ENCODE measurements at regions of chr22 and their contacts with region 1.

Region 1: DNA sequence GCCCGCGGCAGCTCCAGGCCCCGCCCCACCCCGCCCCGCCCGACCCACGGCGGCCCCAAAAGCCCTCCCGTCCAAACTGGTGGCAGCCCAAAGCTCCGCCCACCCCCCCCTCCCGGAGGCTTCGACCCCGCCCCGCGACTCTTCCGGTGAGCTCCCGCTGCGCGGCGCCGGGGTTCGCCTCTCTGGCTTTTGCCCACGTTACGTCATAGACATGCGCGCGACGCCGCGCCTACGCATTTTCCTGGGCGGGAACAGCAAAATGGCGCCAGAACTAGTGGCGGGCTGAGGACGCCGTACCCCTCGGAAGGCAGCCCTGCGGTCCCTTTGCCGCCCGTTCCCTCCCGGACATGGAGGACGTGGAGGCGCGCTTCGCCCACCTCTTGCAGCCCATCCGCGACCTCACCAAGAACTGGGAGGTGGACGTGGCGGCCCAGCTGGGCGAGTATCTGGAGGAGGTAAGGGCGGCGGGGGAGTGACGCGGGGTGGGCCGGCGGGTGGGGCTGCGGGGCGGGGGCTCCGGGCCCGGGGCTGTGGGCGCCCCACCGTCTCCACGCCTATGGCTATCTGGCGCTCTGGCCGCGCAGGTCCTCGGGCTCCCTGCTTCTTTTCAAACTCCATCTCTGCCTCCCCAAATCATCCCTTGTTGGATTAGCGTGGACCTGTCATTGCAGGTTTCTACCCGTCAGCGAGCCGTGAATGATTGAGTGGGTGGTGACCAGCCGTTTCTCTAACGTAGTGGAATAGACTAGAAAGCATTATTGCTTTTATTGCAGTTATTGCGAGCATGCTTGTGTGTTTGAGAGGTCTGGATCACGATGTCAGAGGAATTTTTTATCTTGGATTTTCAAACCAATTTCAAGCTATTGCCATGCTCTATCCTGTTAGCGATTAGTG is at the start of gene NCAPH2:
- DNase-seq: peak; percentile 96
- H3K4me3 Mint-ChIP-seq: peak within 1 kb of the TSS; percentile 92
- H3K27ac Mint-ChIP-seq: peak within 1 kb of the TSS; percentile 93
- H3K4me1 Mint-ChIP-seq: peaks cover 12% of the 10 kb centered on the region
- H3K27me3 Mint-ChIP-seq: no peaks in the 10 kb centered on the region
- CTCF ChIP-seq: no peak
- total RNA-seq, gene NCAPH2: 31.6 and 39.8 TPM in 2 replicates

Region 2: GRCh38 chr22:50525390-50526068 is 17.3 kb after region 1 on chr22 and contains the start of gene SCO2:
- CTCF ChIA-PET with region 1: interaction called, 7 read pairs
- POLR2A ChIA-PET with region 1: interaction called, 113 read pairs
- intact Hi-C with region 1: no loop called
- DNase-seq: peak; percentile 96
- H3K4me3 Mint-ChIP-seq: peak within 1 kb of the TSS; percentile 85
- H3K27ac Mint-ChIP-seq: peak within 1 kb of the TSS; percentile 88
- H3K4me1 Mint-ChIP-seq: peaks cover 20% of the 10 kb centered on the region
- H3K27me3 Mint-ChIP-seq: no peaks in the 10 kb centered on the region
- CTCF ChIP-seq: peak; percentile 49
- total RNA-seq, gene SCO2: 2.4 and 5.4 TPM in 2 replicates

Region 3: DNA sequence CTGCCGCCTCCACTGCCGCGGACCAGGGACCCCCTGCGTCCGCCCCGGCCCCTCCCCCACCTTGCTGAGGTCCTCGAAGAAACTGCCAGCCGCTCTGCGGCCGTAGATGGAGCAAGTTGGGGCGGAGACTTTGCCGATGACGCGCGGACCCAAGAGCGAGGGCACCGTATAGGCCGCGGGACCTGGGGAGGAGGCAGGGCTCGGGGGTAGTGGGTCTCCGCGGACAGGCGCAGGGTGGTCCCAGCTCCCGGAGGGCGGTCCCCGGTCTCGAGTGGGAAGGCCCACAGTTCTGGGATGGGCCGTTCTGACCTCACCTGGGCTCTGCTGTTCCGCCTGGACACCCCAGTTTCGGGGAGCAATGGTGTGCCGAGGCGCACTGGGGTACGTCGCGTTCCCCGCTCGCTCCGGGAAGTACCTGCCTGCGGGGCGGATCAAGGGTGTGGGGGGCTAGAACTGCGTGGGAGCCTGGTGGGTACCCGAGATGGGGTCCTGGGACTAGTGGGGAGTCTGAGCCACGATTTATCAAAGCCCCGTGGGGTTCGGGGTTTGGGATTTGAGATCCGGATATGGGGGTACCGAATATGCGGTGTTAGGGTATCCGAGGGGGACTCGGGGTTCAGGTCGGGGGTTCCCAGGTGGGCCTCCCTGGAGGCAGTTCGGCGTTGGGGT is 22.8 kb after region 1 on chr22:
- CTCF ChIA-PET with region 1: interaction called, 7 read pairs
- POLR2A ChIA-PET with region 1: interaction called, 113 read pairs
- intact Hi-C with region 1: no loop called
- DNase-seq: peak; percentile 94
- H3K4me3 Mint-ChIP-seq: peak overlapping the region; percentile 85
- H3K27ac Mint-ChIP-seq: peak overlapping the region; percentile 97
- H3K4me1 Mint-ChIP-seq: peaks cover 22% of the 10 kb centered on the region
- H3K27me3 Mint-ChIP-seq: no peaks in the 10 kb centered on the region
- CTCF ChIP-seq: no peak

Region 4: DNA sequence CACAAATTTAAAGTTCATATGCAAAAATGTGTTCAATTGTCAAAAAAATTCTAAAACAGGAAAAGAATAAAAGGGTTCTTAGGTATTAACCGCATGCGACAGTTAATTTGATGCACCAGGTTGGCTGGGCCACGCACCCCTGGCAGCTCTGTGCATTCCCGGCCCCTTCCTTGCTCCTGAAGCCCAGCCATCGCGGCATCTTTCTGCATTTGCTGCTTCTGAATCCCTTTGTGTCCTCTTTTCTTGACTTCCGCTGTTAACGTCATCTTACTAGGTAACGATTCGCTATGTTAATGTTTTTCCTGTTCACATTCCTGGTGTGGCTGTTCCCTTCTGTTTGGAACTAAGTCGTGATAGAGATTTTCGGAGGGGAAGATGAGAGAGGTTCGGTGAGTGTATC is 29.5 kb after region 1 on chr22:
- CTCF ChIA-PET with region 1: interaction called, 3 read pairs
- POLR2A ChIA-PET with region 1: interaction called, 38 read pairs
- intact Hi-C with region 1: no loop called
- DNase-seq: no peak
- H3K4me3 Mint-ChIP-seq: no peak overlapping the region
- H3K27ac Mint-ChIP-seq: peak overlapping the region; percentile 85
- H3K4me1 Mint-ChIP-seq: peaks cover 40% of the 10 kb centered on the region
- H3K27me3 Mint-ChIP-seq: no peaks in the 10 kb centered on the region
- CTCF ChIP-seq: no peak

Measured in MCF 10A (cell line).